ENCODE measurements at regions of chr3 and their contacts with region 1.

Region 1: DNA sequence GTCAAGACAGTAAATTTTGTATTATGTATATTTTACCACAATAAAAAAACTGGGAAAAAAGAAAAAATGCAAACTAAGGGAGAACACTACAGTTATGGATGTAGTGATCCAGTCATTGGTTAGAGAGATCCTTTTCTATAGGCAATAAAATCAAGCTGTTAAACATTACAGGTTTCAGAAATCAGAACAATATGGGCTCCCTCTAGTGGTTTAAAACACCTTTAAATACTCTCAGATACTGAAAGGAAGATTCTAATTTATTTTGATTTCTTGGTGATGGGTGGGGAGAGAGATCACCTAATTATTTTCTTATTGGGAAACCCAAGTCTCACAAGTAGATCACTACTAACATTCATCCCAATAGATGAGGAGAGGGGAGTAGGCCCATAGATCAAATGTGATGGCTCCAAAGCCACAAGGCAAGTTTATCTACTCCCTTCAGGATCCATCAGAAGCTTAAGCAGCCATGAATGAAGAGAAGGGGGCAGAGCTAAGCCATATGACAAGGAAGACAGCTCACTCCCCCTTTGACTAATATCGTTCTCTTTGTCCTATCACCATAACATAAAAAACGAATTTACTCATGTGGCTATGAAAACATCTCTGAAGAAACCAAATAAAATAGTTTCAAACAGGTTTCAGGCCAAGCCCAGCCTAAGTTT is 118.6 kb downstream of the ANO10 start:
- DNase-seq: no peak
- H3K4me3 Mint-ChIP-seq: no peak overlapping the region
- H3K27ac Mint-ChIP-seq: no peak overlapping the region
- H3K4me1 Mint-ChIP-seq: peaks cover 56% of the 10 kb centered on the region
- H3K27me3 Mint-ChIP-seq: no peaks in the 10 kb centered on the region

Region 2: GRCh38 chr3:42961633-42962032 is 541.6 kb before region 1 on chr3:
- CTCF ChIA-PET with region 1: interaction called, 11 read pairs
- POLR2A ChIA-PET with region 1: no interaction called
- intact Hi-C with region 1: loop called (anchors 5 kb)
- DNase-seq: peak; percentile 15
- H3K4me3 Mint-ChIP-seq: no peak overlapping the region
- H3K27ac Mint-ChIP-seq: no peak overlapping the region
- H3K4me1 Mint-ChIP-seq: peaks cover 11% of the 10 kb centered on the region
- H3K27me3 Mint-ChIP-seq: peaks cover 3% of the 10 kb centered on the region

Region 3: GRCh38 chr3:43162230-43163084 is 340.7 kb before region 1 on chr3:
- CTCF ChIA-PET with region 1: interaction called, 60 read pairs
- POLR2A ChIA-PET with region 1: no interaction called
- intact Hi-C with region 1: loop called (anchors 1 kb)
- DNase-seq: peak; percentile 60
- H3K4me3 Mint-ChIP-seq: peak overlapping the region; percentile 65
- H3K27ac Mint-ChIP-seq: peak overlapping the region; percentile 84
- H3K4me1 Mint-ChIP-seq: peaks cover 24% of the 10 kb centered on the region
- H3K27me3 Mint-ChIP-seq: no peaks in the 10 kb centered on the region

Region 4: GRCh38 chr3:43223670-43224364 is 279.4 kb before region 1 on chr3:
- CTCF ChIA-PET with region 1: interaction called, 4 read pairs
- POLR2A ChIA-PET with region 1: no interaction called
- intact Hi-C with region 1: loop called (anchors 2 kb)
- DNase-seq: no peak
- H3K4me3 Mint-ChIP-seq: no peak overlapping the region
- H3K27ac Mint-ChIP-seq: no peak overlapping the region
- H3K4me1 Mint-ChIP-seq: peaks cover 45% of the 10 kb centered on the region
- H3K27me3 Mint-ChIP-seq: no peaks in the 10 kb centered on the region

Region 5: DNA sequence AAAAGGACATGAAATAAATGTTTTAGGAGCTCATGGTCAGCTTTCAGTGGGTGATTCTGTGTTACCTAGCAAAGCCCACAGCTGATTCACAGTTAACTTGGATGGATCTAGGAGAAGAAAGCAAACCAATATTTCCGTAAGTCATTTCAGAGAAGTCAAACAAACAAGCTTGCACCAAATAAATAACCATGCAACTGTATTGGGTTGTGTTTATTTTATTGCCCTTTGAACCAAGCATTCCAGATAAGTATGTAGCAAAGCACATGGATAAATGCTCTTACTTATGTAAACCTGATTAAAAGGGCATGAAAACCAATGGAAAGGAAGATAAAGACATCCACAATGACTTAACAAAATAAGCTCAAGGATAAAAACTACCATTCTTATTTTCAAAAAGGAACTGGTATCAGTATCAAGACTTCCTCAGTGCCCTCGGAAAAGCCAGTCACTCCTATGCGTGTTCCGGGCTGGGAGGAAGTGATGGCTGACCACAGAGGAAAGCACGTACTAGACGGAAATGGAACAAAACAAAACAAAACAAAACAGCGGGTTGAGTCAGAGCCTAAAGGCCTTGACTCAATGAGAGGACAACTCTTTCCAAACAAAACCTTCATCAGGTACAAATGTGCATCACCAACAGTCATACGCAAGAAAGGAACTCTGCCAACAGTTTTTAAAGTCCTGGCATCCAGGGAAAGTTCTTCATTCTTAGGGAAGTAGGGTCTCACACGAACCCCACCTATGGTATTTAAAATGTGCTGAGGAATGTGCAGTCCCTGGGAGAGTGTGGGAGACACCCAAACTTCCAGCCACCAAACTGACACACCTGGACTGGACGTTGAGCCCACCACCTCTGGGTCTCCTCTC is 113.6 kb before region 1 on chr3:
- CTCF ChIA-PET with region 1: interaction called, 10 read pairs
- POLR2A ChIA-PET with region 1: interaction called, 3 read pairs
- intact Hi-C with region 1: loop called (anchors 1 kb)
- DNase-seq: peak; percentile 85
- H3K4me3 Mint-ChIP-seq: peak overlapping the region; percentile 27
- H3K27ac Mint-ChIP-seq: peak overlapping the region; percentile 86
- H3K4me1 Mint-ChIP-seq: peaks cover 69% of the 10 kb centered on the region
- H3K27me3 Mint-ChIP-seq: no peaks in the 10 kb centered on the region

Region 6: GRCh38 chr3:43477600-43477999 is 25.6 kb before region 1 on chr3:
- CTCF ChIA-PET with region 1: no interaction called
- POLR2A ChIA-PET with region 1: no interaction called
- intact Hi-C with region 1: loop called (anchors 2 kb)
- DNase-seq: peak; percentile 80
- H3K4me3 Mint-ChIP-seq: peak overlapping the region; percentile 11
- H3K27ac Mint-ChIP-seq: peak overlapping the region; percentile 88
- H3K4me1 Mint-ChIP-seq: peaks cover 32% of the 10 kb centered on the region
- H3K27me3 Mint-ChIP-seq: no peaks in the 10 kb centered on the region

Region 7: DNA sequence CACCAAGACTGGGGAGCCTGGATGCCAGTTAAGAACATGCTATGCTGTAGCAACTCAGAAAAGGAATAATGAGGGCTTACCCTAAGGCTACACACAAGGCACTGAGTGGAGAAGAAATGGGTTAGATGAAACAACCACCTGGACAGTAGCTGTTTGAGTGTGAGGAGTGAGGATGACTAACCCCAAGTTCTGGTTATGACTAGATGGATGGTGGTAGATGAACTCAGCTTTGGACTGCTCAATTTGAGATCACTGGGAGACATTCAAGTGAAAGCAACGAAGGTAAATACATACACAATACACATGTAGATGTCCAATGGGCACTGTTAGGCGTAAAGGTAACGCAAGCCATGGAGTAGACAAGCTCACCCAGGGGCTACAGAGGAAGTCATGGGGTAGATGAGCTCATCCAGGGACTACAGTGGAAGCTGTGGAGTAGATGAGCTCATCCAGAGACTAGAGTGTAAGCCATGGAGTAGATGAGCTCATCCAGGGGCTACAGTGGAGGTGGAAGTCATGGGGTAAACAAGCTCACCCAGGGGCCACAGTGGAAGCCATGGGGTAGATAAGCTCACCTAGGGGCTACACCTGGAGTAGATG is 20.4 kb after region 1 on chr3:
- CTCF ChIA-PET with region 1: interaction called, 12 read pairs
- POLR2A ChIA-PET with region 1: interaction called, 3 read pairs
- intact Hi-C with region 1: loop called (anchors 1 kb)
- DNase-seq: peak; percentile 47
- H3K4me3 Mint-ChIP-seq: no peak overlapping the region
- H3K27ac Mint-ChIP-seq: no peak overlapping the region
- H3K4me1 Mint-ChIP-seq: no peaks in the 10 kb centered on the region
- H3K27me3 Mint-ChIP-seq: no peaks in the 10 kb centered on the region

Region 8: GRCh38 chr3:43549626-43550290 is 46.6 kb after region 1 on chr3:
- CTCF ChIA-PET with region 1: no interaction called
- POLR2A ChIA-PET with region 1: no interaction called
- intact Hi-C with region 1: no loop called
- DNase-seq: no peak
- H3K4me3 Mint-ChIP-seq: no peak overlapping the region
- H3K27ac Mint-ChIP-seq: no peak overlapping the region
- H3K4me1 Mint-ChIP-seq: no peaks in the 10 kb centered on the region
- H3K27me3 Mint-ChIP-seq: no peaks in the 10 kb centered on the region

Region 9: DNA sequence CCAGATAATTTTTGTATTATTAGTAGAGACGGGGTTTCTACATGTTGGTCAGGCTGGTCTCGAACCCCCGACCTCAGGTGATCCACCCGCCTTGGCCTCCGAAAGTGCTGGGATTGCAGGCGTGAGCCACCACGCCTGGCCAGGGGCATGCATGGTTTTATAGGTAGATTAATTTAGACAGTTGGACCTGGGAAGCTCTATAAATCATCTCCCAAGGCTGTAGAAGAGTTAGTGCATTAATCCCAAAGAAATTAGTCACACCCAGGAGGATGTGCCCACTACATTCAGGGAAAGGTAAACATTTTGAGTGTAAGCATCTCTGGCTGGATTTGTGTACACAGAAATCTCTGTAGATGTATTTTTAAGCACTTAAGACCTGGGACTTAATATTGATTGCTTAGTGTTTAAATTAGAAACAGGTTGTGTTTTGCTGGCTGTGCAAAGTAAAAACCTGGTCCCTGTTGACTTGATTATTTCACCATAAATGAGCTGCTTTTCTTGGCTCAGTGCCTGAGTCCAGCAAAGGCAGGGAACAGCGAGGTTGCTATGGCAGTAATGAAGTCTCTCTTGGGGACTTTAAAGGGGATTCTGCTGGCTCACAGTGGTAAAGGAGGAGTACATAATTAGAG is 1492.1 kb after region 1 on chr3:
- CTCF ChIA-PET with region 1: no interaction called
- POLR2A ChIA-PET with region 1: no interaction called
- intact Hi-C with region 1: no loop called
- DNase-seq: no peak
- H3K4me3 Mint-ChIP-seq: no peak overlapping the region
- H3K27ac Mint-ChIP-seq: no peak overlapping the region
- H3K4me1 Mint-ChIP-seq: peaks cover 64% of the 10 kb centered on the region
- H3K27me3 Mint-ChIP-seq: no peaks in the 10 kb centered on the region